ENCODE measurements at regions of chr17 and their contacts with region 1.

Region 1: DNA sequence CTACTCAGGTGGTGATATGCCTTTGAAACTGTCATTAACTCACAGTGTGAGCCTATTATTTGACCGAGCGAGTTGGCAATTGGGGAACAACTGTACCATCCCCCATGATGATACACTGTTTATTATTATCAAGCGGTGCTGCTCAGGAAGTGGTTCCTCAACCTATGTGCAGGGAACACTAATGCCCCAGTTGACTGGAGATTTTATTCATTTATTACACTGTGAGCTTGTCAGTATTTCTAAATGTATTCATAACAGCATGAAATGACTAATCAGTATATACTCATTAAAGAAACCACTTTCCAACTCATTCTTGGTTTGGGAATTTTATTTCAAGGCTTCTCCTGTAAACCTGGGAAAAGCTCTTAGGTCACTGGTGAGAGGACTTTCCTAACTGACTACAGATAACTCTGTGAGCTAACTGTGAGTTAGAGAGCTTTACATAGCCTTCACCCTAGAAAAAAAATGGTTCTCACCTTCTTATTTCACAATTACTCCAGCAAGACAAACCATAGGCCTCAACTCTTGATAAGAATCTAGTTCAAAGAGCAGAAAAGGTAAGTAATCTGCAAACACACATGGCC is 42.4 kb downstream of the NXPH3 start:
- DNase-seq: peak; percentile 19
- ATAC-seq: peak; percentile 87
- H3K4me3 Mint-ChIP-seq: no peak overlapping the region
- H3K27ac Mint-ChIP-seq: peak overlapping the region; percentile 45
- H3K4me1 Mint-ChIP-seq: peaks cover 36% of the 10 kb centered on the region
- H3K27me3 Mint-ChIP-seq: no peaks in the 10 kb centered on the region

Region 2: DNA sequence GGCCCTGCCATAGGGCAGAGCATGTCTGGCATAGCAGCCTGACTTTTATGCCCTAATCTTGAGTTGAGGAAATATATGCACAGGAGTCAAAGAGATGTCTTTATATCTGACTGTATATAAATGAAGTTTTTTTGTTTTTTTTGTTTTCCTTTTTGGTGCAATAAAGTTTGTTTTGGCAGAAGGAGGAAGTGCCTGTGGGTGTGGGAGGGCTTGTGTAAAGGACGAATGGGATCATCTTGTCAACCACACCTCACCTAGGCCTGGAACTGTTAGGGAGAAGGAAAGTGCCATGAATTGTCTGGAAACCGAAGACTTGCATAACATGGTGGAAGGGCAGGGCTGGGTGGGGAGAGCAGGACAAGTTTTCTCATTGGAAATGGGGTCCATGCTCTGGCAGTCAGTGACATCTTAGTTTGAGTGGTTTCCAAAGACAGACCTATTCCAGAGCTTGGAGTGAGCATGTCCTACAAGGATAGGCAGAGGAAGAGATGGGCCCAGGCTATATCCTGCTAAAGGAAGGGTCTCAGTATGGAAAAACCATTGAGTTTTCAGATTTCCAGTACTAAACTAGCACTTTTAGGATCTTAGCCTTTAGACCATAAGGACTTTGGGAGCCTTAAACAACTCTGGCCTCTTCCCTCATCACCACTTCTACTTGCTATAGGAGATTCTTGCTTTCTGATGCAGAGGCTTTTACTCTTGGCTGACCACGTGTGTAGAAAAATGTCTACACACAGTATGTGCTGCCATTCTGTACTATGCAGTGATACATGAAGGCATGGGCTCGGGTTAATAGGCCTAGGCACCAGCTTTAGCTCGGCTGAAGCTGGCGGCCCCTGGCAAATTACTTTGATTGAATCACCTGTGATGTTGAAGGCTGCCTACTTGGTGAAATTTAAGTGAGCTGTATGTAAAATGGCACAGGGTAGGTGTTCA is 689.0 kb before region 1 on chr17:
- CTCF ChIA-PET with region 1: no interaction called
- POLR2A ChIA-PET with region 1: no interaction called
- intact Hi-C with region 1: no loop called
- DNase-seq: no peak
- ATAC-seq: peak; percentile 11
- H3K4me3 Mint-ChIP-seq: no peak overlapping the region
- H3K27ac Mint-ChIP-seq: peak overlapping the region; percentile 82
- H3K4me1 Mint-ChIP-seq: peaks cover 17% of the 10 kb centered on the region
- H3K27me3 Mint-ChIP-seq: no peaks in the 10 kb centered on the region

Region 3: GRCh38 chr17:49646391-49647255 is 28.5 kb after region 1 on chr17:
- CTCF ChIA-PET with region 1: no interaction called
- POLR2A ChIA-PET with region 1: interaction called, 6 read pairs
- intact Hi-C with region 1: loop called in 1 of 2 experiments (anchors 2 kb)
- DNase-seq: peak; percentile 78
- ATAC-seq: peak; percentile 91
- H3K4me3 Mint-ChIP-seq: peak overlapping the region; percentile 32
- H3K27ac Mint-ChIP-seq: peak overlapping the region; percentile 84
- H3K4me1 Mint-ChIP-seq: peaks cover 63% of the 10 kb centered on the region
- H3K27me3 Mint-ChIP-seq: no peaks in the 10 kb centered on the region

Measured in activated CD4-positive, alpha-beta T cell treated with anti-CD3 and anti-CD28 coated beads for 36 hours (primary cell).